GM13977 (cell line): ENCODE measurements at regions of chr12 and their contacts with region 1.

Region 1: DNA sequence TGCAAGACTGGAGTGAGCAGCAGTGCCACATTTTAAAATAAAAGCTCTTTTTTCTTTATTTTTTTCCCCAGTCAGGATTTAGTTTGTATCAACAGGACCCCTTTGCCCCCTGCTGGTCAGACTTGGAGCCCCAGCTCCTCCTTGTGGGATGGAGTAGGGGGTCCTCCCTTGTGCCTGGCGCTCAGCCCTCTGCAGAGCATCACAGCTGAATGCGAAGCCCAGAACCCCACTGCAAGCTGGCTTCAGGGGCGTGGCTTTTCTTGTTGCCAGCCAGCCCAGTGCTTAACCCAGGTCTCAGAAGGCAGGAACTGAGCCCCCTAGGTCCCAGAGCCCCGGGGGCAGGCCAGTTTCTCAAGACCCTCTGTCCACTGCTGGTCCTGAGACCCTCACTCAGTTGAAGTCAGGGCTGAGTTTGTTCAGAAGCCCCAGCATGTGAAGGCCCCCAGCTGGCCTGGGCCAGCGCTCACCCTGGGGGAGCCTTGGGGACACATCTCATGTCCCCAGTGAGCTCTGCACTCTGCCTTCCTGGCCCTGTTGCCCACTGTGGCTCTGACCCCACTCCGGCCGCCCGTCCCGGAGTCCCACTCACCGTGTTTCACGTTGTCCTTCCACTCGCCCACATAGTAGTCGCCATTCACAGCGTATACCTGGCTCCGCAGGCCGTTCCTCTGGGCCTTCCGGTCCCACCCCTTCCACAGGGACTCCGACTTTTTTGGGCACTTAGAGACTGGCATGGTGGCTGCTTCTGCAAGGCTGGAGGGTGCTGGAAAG is 519 bp downstream of the MORN3 start:
- DNase-seq: peak; percentile 41
- CTCF ChIP-seq: peak; percentile 60

Region 2: GRCh38 chr12:121334513-121335343 is 334.2 kb before region 1 on chr12:
- in situ Hi-C with region 1: loop called (anchors 25 kb)
- DNase-seq: peak; percentile 65
- CTCF ChIP-seq: peak; percentile 80

Region 3: DNA sequence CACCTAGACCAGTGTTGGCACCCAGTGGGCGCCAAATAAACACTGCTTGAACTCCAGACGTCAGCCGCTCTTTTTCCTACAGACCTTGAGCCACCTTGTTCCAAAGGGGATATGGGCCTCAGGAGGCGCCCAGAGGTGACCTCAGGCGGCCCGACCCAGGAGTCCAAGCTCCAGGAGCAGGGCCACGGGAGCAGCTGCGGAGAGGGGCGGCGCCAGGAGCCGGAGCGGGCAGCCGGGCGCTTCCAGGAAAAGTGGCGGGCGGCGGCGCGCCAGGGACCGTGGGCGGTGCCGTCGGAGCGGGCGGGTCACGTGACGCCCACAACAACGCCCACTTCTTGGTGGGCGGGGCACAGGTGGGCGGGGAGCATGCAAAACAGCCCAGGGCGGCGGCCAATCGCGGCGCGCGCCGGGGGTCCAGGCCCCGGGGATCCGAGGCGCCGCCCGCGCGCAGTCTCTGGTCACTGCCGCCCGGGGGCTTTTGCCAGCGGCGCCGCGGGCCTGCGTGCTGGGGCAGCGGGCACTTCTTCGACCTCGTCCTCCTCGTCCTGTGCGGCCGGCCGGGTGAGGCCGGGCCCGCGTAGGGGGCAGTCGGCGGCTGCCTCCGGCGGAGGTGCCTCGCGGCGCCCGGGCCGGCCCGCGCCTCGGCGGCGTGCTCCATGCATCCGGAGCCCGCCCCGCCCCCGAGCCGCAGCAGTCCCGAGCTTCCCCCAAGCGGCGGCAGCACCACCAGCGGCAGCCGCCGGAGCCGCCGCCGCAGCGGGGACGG is 42.7 kb before region 1 on chr12 and contains the start of gene ORAI1:
- in situ Hi-C with region 1: loop called (anchors 10 kb)
- DNase-seq: peak; percentile 96
- CTCF ChIP-seq: no peak